Activated CD4-positive, alpha-beta T cell treated with anti-CD3 and anti-CD28 coated beads for 36 hours (primary cell): ENCODE measurements at regions of chr3 and their contacts with region 1.

Region 1: DNA sequence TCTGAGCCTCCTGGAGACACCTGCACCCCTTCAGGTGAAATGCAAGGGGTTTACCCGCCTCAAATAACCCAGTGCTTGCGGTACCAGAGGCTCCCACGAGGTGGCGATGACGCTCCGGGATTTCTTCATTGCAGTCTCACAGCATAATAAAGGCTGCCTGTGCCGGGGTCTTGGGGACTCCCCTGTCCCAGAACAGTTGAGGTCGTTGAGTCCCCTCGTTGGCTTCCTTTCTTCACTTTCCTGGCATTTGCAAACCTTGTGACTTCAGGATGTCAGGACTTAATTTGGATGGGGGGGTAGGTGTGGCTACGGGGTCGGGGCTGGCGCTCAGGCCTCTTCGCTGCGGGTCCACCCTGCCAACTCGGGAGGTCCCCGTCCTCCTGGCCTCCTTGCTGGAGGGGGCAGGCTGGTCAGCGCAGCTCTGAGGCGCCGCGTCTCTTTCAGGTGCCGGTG is 1.3 kb downstream of the GNAT1 start:
- DNase-seq: peak; percentile 90
- ATAC-seq: peak; percentile 57
- H3K4me3 Mint-ChIP-seq: no peak overlapping the region
- H3K27ac Mint-ChIP-seq: no peak overlapping the region
- H3K4me1 Mint-ChIP-seq: peaks cover 13% of the 10 kb centered on the region
- H3K27me3 Mint-ChIP-seq: peaks cover 12% of the 10 kb centered on the region

Region 2: GRCh38 chr3:49998326-49998725 is 194.4 kb before region 1 on chr3:
- CTCF ChIA-PET with region 1: no interaction called
- POLR2A ChIA-PET with region 1: no interaction called
- intact Hi-C with region 1: no loop called
- DNase-seq: no peak
- ATAC-seq: peak; percentile 19
- H3K4me3 Mint-ChIP-seq: no peak overlapping the region
- H3K27ac Mint-ChIP-seq: peak overlapping the region; percentile 70
- H3K4me1 Mint-ChIP-seq: peaks cover 16% of the 10 kb centered on the region
- H3K27me3 Mint-ChIP-seq: no peaks in the 10 kb centered on the region

Region 3: GRCh38 chr3:50121416-50122032 is 71.2 kb before region 1 on chr3:
- CTCF ChIA-PET with region 1: interaction called, 17 read pairs
- POLR2A ChIA-PET with region 1: no interaction called
- intact Hi-C with region 1: loop called (anchors 1 kb)
- DNase-seq: peak; percentile 87
- ATAC-seq: peak; percentile 93
- H3K4me3 Mint-ChIP-seq: no peak overlapping the region
- H3K27ac Mint-ChIP-seq: no peak overlapping the region
- H3K4me1 Mint-ChIP-seq: no peaks in the 10 kb centered on the region
- H3K27me3 Mint-ChIP-seq: no peaks in the 10 kb centered on the region

Region 4: GRCh38 chr3:50221411-50222168 is 28.9 kb after region 1 on chr3:
- CTCF ChIA-PET with region 1: interaction called, 79 read pairs
- POLR2A ChIA-PET with region 1: interaction called, 3 read pairs
- intact Hi-C with region 1: loop called (anchors 1 kb)
- DNase-seq: no peak
- ATAC-seq: no peak
- H3K4me3 Mint-ChIP-seq: no peak overlapping the region
- H3K27ac Mint-ChIP-seq: no peak overlapping the region
- H3K4me1 Mint-ChIP-seq: peaks cover 8% of the 10 kb centered on the region
- H3K27me3 Mint-ChIP-seq: no peaks in the 10 kb centered on the region

Region 5: DNA sequence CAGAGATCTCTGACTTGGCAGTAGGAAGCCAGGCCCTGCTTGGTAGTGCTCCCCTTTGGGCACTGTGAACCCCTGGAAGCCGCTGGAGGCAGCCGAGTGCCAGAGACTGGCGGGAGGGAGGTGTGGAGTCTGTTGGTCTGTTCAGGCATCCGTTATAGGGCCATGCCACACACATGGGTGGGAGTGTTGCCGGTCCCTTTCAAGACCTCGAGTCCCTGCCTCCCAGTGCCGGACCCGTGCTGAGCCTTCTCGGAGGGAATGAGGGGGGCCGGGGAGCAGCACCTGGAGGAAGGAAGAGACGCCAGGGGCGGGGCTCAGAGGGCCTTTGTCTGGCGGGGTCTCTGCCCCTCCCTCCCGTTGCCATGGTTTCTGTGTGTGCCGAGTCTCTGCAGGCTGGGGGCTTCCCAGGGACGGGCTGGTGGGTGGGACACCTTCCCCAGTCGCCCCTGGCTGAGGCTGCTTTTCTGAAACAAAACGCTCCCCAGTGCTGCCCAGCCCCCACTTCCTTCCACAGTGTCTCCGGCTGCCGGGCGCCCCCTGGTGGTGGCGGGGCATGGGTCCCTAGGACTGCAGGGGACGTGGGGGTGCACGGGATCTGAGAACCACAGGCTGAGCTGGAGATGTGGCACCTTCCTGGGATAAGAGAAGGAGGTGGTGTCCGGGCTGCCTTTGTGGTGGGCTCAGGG is 53.3 kb after region 1 on chr3:
- CTCF ChIA-PET with region 1: interaction called, 18 read pairs
- POLR2A ChIA-PET with region 1: interaction called, 6 read pairs
- intact Hi-C with region 1: loop called (anchors 1 kb)
- DNase-seq: peak; percentile 98
- ATAC-seq: peak; percentile 76
- H3K4me3 Mint-ChIP-seq: peak overlapping the region; percentile 75
- H3K27ac Mint-ChIP-seq: peak overlapping the region; percentile 95
- H3K4me1 Mint-ChIP-seq: peaks cover 84% of the 10 kb centered on the region
- H3K27me3 Mint-ChIP-seq: no peaks in the 10 kb centered on the region

Region 6: GRCh38 chr3:50272911-50273693 is 80.4 kb after region 1 on chr3:
- CTCF ChIA-PET with region 1: interaction called, 21 read pairs
- POLR2A ChIA-PET with region 1: no interaction called
- intact Hi-C with region 1: loop called (anchors 1 kb)
- DNase-seq: peak; percentile 96
- ATAC-seq: peak; percentile 87
- H3K4me3 Mint-ChIP-seq: peak overlapping the region; percentile 68
- H3K27ac Mint-ChIP-seq: peak overlapping the region; percentile 58
- H3K4me1 Mint-ChIP-seq: peaks cover 25% of the 10 kb centered on the region
- H3K27me3 Mint-ChIP-seq: peaks cover 37% of the 10 kb centered on the region

Region 7: DNA sequence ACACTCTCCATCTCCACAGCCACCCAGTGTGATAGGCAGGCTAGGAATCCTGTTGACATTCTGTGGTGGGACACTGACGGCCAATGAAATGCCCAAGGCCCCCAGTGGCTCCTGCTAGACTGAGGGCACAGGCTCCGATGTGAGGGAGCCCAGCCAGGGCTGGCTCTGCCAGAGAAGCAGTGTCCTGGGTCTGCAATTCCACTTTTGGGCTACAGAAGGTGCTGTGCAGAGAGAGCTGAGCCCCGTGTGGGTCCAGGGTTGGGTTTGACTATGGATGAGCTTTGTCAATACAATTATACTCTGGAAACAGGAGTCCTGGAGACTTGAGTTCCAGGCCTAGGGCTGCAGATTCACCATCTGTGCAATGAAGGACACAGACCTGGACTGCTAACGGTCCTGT is 222.4 kb after region 1 on chr3:
- CTCF ChIA-PET with region 1: no interaction called
- POLR2A ChIA-PET with region 1: no interaction called
- intact Hi-C with region 1: no loop called
- DNase-seq: no peak
- ATAC-seq: no peak
- H3K4me3 Mint-ChIP-seq: no peak overlapping the region
- H3K27ac Mint-ChIP-seq: no peak overlapping the region
- H3K4me1 Mint-ChIP-seq: peaks cover 4% of the 10 kb centered on the region
- H3K27me3 Mint-ChIP-seq: no peaks in the 10 kb centered on the region